CD4-positive, alpha-beta memory T cell (primary cell): ENCODE measurements at regions of chr3 and their contacts with region 1.

Region 1: GRCh38 chr3:62343755-62344154 is 29.6 kb downstream of the FEZF2 start:
- DNase-seq: no peak
- H3K4me3 ChIP-seq: no peak overlapping the region
- H3K4me3 Mint-ChIP-seq: no peak overlapping the region
- H3K27ac ChIP-seq: no peak overlapping the region
- H3K27ac Mint-ChIP-seq: no peak overlapping the region
- H3K4me1 ChIP-seq: no peaks in the 10 kb centered on the region
- H3K4me1 Mint-ChIP-seq: no peaks in the 10 kb centered on the region
- H3K27me3 ChIP-seq: no peaks in the 10 kb centered on the region
- H3K27me3 Mint-ChIP-seq: peaks cover 2% of the 10 kb centered on the region in 2 donors

Region 2: DNA sequence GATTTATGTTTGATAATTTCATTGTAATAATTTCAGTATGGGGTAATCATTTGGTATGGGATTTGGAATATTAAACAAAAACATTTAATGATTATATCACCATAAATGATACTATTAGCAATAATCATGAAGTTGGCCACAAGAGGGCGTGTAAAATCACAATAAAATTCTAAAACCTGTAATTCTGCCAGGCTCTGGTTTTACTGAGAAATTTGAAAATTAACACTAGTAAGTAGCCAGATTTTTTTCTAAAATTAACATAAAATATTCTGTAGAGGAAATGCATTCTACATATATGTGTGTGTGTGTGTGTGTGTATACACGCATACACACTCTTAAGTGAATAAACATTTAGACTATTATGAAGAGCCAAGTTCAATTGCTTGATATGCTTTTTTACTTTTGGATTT is 10.9 kb before region 1 on chr3:
- CTCF ChIA-PET with region 1: interaction called, 10 read pairs
- POLR2A ChIA-PET with region 1: no interaction called
- intact Hi-C with region 1: no loop called
- DNase-seq: peak in 1 of 5 donors; percentile 4
- H3K4me3 ChIP-seq: no peak overlapping the region
- H3K4me3 Mint-ChIP-seq: no peak overlapping the region
- H3K27ac ChIP-seq: no peak overlapping the region
- H3K27ac Mint-ChIP-seq: no peak overlapping the region
- H3K4me1 ChIP-seq: no peaks in the 10 kb centered on the region
- H3K4me1 Mint-ChIP-seq: no peaks in the 10 kb centered on the region
- H3K27me3 ChIP-seq: no peaks in the 10 kb centered on the region
- H3K27me3 Mint-ChIP-seq: no peaks in the 10 kb centered on the region